HepG2 (cell line): ENCODE measurements at regions of chr3 and their contacts with region 1.

Region 1: GRCh38 chr3:127690823-127691452 is 18.2 kb downstream of the ABTB1 start:
- DNase-seq: peak; percentile 59
- ATAC-seq: peak; percentile 99
- H3K4me3 ChIP-seq: peak overlapping the region in 1 of 3 experiments; percentile 13; a peak in 1 of 6 replicates
- H3K27ac ChIP-seq: no peak overlapping the region
- H3K4me1 ChIP-seq: peaks cover 7% of the 10 kb centered on the region
- H3K27me3 ChIP-seq: peaks cover 0 to 6% of the 10 kb centered on the region in 2 experiments; a peak in 2 of 5 replicates
- CTCF ChIP-seq: peak; percentile 91
- EP300 ChIP-seq: no peak
- POLR2A ChIP-seq: no peak
- RAD21 ChIP-seq: peak; percentile 81

Region 2: GRCh38 chr3:127831723-127832172 is 140.8 kb after region 1 on chr3:
- CTCF ChIA-PET with region 1: interaction called, 4 read pairs
- POLR2A ChIA-PET with region 1: no interaction called
- in situ Hi-C with region 1: loop called (anchors 5 kb)
- intact Hi-C with region 1: loop called (anchors 10 kb)
- DNase-seq: no peak
- ATAC-seq: peak; percentile 85
- H3K4me3 ChIP-seq: no peak overlapping the region
- H3K27ac ChIP-seq: no peak overlapping the region
- H3K4me1 ChIP-seq: peaks cover 22% of the 10 kb centered on the region
- H3K27me3 ChIP-seq: no peaks in the 10 kb centered on the region; a peak in 1 of 5 replicates
- CTCF ChIP-seq: peak; percentile 64
- EP300 ChIP-seq: no peak
- POLR2A ChIP-seq: no peak
- RAD21 ChIP-seq: peak; percentile 72

Region 3: DNA sequence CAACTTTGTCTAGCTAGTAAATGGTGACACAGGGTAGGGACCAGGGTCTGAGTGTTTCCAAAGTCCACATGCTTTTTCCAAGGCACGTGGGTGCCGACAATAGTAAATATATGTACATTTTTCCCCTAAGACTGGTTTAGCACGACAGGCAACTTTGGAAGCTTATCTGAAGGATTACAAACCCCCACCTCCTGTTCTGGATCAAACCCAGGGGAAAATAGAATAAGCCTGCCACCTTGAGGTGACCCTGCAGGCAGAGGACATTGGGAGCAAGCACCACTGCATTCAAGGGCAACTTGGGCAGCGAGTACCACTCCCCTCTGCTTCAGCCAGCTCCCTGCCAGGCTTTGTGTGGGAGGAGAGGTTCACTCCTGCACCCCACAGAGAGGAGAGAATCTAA is 268.9 kb after region 1 on chr3:
- CTCF ChIA-PET with region 1: interaction called, 3 read pairs
- POLR2A ChIA-PET with region 1: no interaction called
- in situ Hi-C with region 1: loop called (anchors 10 kb)
- intact Hi-C with region 1: no loop called
- DNase-seq: peak; percentile 23
- ATAC-seq: peak; percentile 71
- H3K4me3 ChIP-seq: no peak overlapping the region
- H3K27ac ChIP-seq: no peak overlapping the region
- H3K4me1 ChIP-seq: peaks cover 11% of the 10 kb centered on the region
- H3K27me3 ChIP-seq: 0 out of 5 replicates have a peak, but pooled peaks cover 0 to 8% of the 10 kb centered on the region in 2 experiments
- CTCF ChIP-seq: peak; percentile 74
- EP300 ChIP-seq: no peak
- POLR2A ChIP-seq: no peak
- RAD21 ChIP-seq: peak; percentile 26; the same call in 1 of the 2 replicates

Region 4: DNA sequence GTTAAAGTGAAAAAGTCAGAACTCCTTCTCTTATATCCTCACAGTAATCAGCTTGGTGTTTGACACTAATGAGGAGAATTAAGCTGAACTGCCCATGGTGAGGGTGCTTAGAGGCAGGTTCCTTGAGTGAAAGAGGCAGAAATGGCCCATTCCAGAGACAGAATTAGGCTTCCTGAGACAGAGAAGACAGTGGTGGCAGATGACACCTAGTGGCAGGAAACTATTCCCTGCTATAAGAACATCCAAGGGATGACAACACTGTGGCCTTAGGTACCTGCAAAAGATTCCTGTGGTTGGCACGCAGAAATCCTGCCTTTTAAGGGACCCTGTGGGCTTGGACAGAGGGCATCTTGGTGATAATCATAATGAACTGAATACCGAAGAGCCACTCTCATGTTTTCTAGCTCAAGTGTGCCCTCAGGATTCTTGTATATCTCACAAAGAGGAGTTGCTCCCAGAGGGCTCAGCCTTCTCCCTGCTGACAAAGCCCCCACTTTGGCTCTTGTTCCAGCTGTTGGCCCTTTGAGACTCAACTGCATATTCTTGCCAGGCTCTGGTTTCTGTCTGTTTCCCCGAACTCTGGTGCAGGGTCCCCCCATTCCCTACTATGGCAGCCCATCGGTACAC is 280.1 kb after region 1 on chr3:
- CTCF ChIA-PET with region 1: interaction called, 6 read pairs
- POLR2A ChIA-PET with region 1: no interaction called
- in situ Hi-C with region 1: loop called (anchors 10 kb)
- intact Hi-C with region 1: loop called (anchors 1 kb)
- DNase-seq: peak; percentile 34
- ATAC-seq: peak; percentile 90
- H3K4me3 ChIP-seq: no peak overlapping the region
- H3K27ac ChIP-seq: no peak overlapping the region
- H3K4me1 ChIP-seq: peaks cover 13% of the 10 kb centered on the region
- H3K27me3 ChIP-seq: peaks cover 0 to 3% of the 10 kb centered on the region in 2 experiments; a peak in 1 of 5 replicates
- CTCF ChIP-seq: peak; percentile 78
- EP300 ChIP-seq: no peak
- POLR2A ChIP-seq: no peak
- RAD21 ChIP-seq: no peak